ENCODE measurements at regions of chr1 and their contacts with region 1.

Region 1: GRCh38 chr1:53945433-53946251 is at the start of gene IFT25:
- DNase-seq: peak; percentile 96 to 100 (median 98)
- ATAC-seq: peak; percentile 87 to 95 (median 90)
- H3K4me3 ChIP-seq: peak within 1 kb of the TSS; percentile 73 to 83 (median 78)
- H3K27ac ChIP-seq: peak within 1 kb of the TSS; percentile 71 to 88 (median 79)
- H3K4me1 ChIP-seq: peaks cover 0 to 18% (median 6%) of the 10 kb centered on the region in 3 donors
- H3K27me3 ChIP-seq: no peaks in the 10 kb centered on the region
- CTCF ChIP-seq: no peak
- total RNA-seq, gene IFT25: 5.9 to 12.0 (median 8.7) TPM

Region 2: GRCh38 chr1:53869454-53870117 is 76.1 kb before region 1 on chr1:
- intact Hi-C with region 1: loop called in 1 of 3 experiments (anchors 5 kb)
- DNase-seq: no peak
- ATAC-seq: no peak
- H3K4me3 ChIP-seq: no peak overlapping the region
- H3K27ac ChIP-seq: no peak overlapping the region
- H3K4me1 ChIP-seq: no peaks in the 10 kb centered on the region
- H3K27me3 ChIP-seq: no peaks in the 10 kb centered on the region
- CTCF ChIP-seq: no peak

Region 3: GRCh38 chr1:53889304-53890298 is 56.0 kb before region 1 on chr1 and contains the start of gene YIPF1:
- intact Hi-C with region 1: loop called in 1 of 3 experiments (anchors 5 kb)
- DNase-seq: peak; percentile 89 to 96 (median 91)
- ATAC-seq: peak; percentile 99 to 100 (median 100)
- H3K4me3 ChIP-seq: peak within 1 kb of the TSS; percentile 52 to 99 (median 87)
- H3K27ac ChIP-seq: peak within 1 kb of the TSS; percentile 27 to 82 (median 47)
- H3K4me1 ChIP-seq: peaks cover 0 to 9% (median 5%) of the 10 kb centered on the region in 3 donors
- H3K27me3 ChIP-seq: no peaks in the 10 kb centered on the region
- CTCF ChIP-seq: no peak
- total RNA-seq, gene YIPF1: 5.6 to 17.7 (median 10.9) TPM

Measured in pancreas (tissue), 10 donors.